Naive thymus-derived CD4-positive, alpha-beta T cell (primary cell): ENCODE measurements at regions of chr19 and their contacts with region 1.

Region 1: DNA sequence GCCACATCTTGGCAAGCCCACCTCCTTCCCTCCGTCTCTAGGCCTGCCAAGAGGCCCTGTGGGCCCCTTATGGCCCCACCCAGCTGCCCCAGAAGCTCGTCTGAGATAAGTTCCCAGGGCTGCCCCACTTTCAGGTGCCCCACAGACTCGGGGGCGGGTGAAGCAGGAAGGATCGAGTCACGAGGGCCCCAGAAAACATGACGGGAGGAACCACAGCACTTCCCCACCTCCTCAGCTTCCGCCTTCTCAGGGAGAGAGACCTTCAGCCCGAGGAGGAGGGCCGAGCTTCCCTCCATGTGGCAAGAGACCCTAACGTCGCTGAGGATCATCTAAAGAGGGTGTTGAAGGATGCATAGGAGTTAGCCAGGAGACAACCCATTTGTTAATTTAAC is 4.5 kb upstream of the IL12RB1 start:
- DNase-seq: peak; percentile 52 to 84 (median 79)
- ATAC-seq: peak; percentile 84
- H3K4me3 ChIP-seq: no peak overlapping the region
- H3K4me3 Mint-ChIP-seq: peak overlapping the region; percentile 59 to 95 (median 74)
- H3K27ac ChIP-seq: peak overlapping the region; percentile 82
- H3K27ac Mint-ChIP-seq: peak overlapping the region; percentile 94 to 99 (median 98)
- H3K4me1 ChIP-seq: peaks cover 54 to 69% of the 10 kb centered on the region in 2 donors
- H3K4me1 Mint-ChIP-seq: peaks cover 35 to 79% (median 64%) of the 10 kb centered on the region in 7 donors
- H3K27me3 ChIP-seq: no peaks in the 10 kb centered on the region
- H3K27me3 Mint-ChIP-seq: no peaks in the 10 kb centered on the region

Region 2: GRCh38 chr19:18044825-18045304 is 46.3 kb before region 1 on chr19:
- CTCF ChIA-PET with region 1: no interaction called
- POLR2A ChIA-PET with region 1: interaction called, 4 read pairs
- intact Hi-C with region 1: loop called in 1 of 2 experiments (anchors 2 kb)
- DNase-seq: peak; percentile 51 to 87 (median 78)
- ATAC-seq: peak; percentile 97
- H3K4me3 ChIP-seq: peak overlapping the region; percentile 79
- H3K4me3 Mint-ChIP-seq: peak overlapping the region; percentile 66 to 90 (median 86)
- H3K27ac ChIP-seq: peak overlapping the region; percentile 76
- H3K27ac Mint-ChIP-seq: peak overlapping the region; percentile 81 to 98 (median 95)
- H3K4me1 ChIP-seq: peaks cover 12 to 31% of the 10 kb centered on the region in 2 donors
- H3K4me1 Mint-ChIP-seq: peaks cover 35 to 60% (median 55%) of the 10 kb centered on the region in 7 donors
- H3K27me3 ChIP-seq: no peaks in the 10 kb centered on the region
- H3K27me3 Mint-ChIP-seq: peaks cover 0 to 10% (median 0%) of the 10 kb centered on the region in 5 donors

Region 3: GRCh38 chr19:18104793-18105131 is 13.5 kb after region 1 on chr19:
- CTCF ChIA-PET with region 1: interaction called, 16 read pairs
- POLR2A ChIA-PET with region 1: interaction called, 169 read pairs
- intact Hi-C with region 1: loop called (anchors 1 to 2 kb)
- DNase-seq: no peak
- ATAC-seq: no peak
- H3K4me3 ChIP-seq: peak overlapping the region; percentile 72
- H3K4me3 Mint-ChIP-seq: peak overlapping the region; percentile 73 to 85 (median 77)
- H3K27ac ChIP-seq: peak overlapping the region; percentile 64
- H3K27ac Mint-ChIP-seq: peak overlapping the region in 8 of 9 donors; percentile 28 to 71 (median 58)
- H3K4me1 ChIP-seq: peaks cover 4 to 6% of the 10 kb centered on the region in 2 donors
- H3K4me1 Mint-ChIP-seq: peaks cover 14 to 28% (median 25%) of the 10 kb centered on the region in 7 donors
- H3K27me3 ChIP-seq: no peaks in the 10 kb centered on the region
- H3K27me3 Mint-ChIP-seq: peaks cover 0 to 6% (median 0%) of the 10 kb centered on the region in 5 donors

Region 4: DNA sequence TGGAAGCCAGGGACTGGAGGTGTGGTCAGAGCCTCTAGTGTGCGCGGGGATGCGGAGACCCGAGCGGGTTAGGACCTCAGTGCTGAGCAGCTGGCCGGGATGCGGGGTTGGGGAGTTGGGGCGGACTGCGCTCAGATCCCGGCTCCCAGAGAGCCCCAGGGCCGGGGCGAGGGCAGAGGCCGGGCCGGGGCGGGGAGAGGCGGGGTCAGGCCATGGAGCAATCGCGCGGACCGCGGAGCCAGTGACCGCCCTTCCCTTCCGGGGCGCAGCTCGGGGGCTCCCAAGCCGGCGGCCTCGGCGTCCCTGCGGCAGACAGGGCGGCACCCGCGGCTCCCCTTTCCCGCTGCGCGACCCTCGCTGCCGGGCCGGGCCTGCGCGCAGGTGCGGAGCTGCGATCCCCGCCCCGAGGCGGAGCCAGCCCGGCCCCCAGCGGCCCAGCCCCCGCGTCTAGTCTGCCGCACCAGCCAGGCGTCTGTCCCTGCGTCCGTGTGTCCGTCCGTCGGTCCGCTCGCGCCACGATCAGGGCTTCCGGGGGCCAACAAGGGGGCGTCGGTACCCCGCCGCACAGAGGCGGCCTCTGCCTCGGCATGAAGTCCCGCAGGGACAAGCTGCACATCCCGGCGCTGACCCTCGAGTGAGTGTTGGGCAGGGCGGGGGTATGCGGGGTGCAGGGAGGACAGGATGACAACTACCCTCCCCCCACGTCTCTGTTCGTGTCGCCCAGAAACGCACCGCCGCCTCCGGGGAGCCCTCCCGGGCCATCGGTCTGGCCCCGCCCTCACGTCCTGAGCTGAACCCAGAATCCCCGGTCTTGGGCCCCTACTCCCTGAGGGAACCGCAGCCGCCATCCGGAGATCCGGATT is 18.8 kb after region 1 on chr19:
- CTCF ChIA-PET with region 1: interaction called, 16 read pairs
- POLR2A ChIA-PET with region 1: interaction called, 169 read pairs
- intact Hi-C with region 1: loop called (anchors 2 kb)
- DNase-seq: peak in 5 of 9 donors; percentile 31 to 72 (median 43)
- ATAC-seq: peak; percentile 72
- H3K4me3 ChIP-seq: peak overlapping the region; percentile 72
- H3K4me3 Mint-ChIP-seq: peak overlapping the region; percentile 70 to 91 (median 83)
- H3K27ac ChIP-seq: peak overlapping the region; percentile 85
- H3K27ac Mint-ChIP-seq: peak overlapping the region in 7 of 9 donors; percentile 79 to 96 (median 88)
- H3K4me1 ChIP-seq: peaks cover 9 to 11% of the 10 kb centered on the region in 2 donors
- H3K4me1 Mint-ChIP-seq: peaks cover 18 to 28% (median 22%) of the 10 kb centered on the region in 7 donors
- H3K27me3 ChIP-seq: no peaks in the 10 kb centered on the region
- H3K27me3 Mint-ChIP-seq: peaks cover 0 to 3% (median 0%) of the 10 kb centered on the region in 5 donors

Region 5: GRCh38 chr19:18167975-18168645 is 76.9 kb after region 1 on chr19:
- CTCF ChIA-PET with region 1: interaction called, 12 read pairs
- POLR2A ChIA-PET with region 1: interaction called, 4 read pairs
- intact Hi-C with region 1: no loop called
- DNase-seq: peak in 7 of 9 donors; percentile 32 to 70 (median 59)
- ATAC-seq: peak; percentile 71
- H3K4me3 ChIP-seq: no peak overlapping the region
- H3K4me3 Mint-ChIP-seq: no peak overlapping the region
- H3K27ac ChIP-seq: no peak overlapping the region
- H3K27ac Mint-ChIP-seq: peak overlapping the region in 2 of 9 donors; percentile 5 to 65
- H3K4me1 ChIP-seq: peaks cover 0 to under 1% of the 10 kb centered on the region in 2 donors
- H3K4me1 Mint-ChIP-seq: peaks cover 0 to 14% (median 4%) of the 10 kb centered on the region in 7 donors
- H3K27me3 ChIP-seq: no peaks in the 10 kb centered on the region
- H3K27me3 Mint-ChIP-seq: no peaks in the 10 kb centered on the region